K562 (cell line): ENCODE measurements at regions of chr10 and their contacts with region 1.

Region 1: DNA sequence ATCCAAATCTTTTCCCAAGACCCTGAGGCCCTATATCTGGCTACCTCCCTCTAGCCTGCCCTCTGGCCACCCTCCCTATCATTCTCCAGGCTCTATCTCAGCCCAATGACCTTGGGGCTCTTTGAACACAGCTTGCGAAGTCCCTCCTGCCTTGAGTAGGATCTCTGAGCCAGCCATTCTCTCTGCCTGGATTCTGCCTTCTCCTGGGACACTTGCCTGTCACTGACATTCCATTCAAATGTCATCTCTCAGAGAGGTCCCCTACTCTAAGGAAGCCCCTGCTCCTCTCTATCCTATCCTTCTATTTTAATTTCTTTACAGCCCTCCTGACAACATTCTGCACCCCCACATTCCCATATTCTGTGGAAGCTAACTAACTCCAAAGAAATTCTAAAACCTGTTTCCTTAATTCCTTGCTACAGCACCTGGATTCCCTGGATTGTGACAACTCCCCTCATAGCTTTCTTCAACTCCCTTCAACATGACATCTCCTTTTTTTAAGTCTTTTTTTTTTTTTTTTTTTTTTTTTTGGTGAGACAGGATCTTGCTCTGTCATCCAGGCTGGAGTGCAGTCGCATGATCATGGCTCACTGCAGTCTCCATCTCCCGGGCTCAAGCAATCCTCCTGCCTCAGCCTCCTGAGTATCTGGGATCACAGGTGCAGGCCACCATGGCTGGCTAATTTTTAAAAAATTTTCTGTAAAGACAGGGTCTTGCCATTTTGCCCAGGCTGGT is 81.0 kb upstream of the ASAH2 start:
- DNase-seq: peak; percentile 44 to 83 (median 60)
- ATAC-seq: peak; percentile 74
- H3K4me3 ChIP-seq: no peak overlapping the region
- H3K27ac ChIP-seq: peak overlapping the region; percentile 97
- H3K4me1 ChIP-seq: peaks cover 22 to 79% of the 10 kb centered on the region in 2 experiments
- H3K27me3 ChIP-seq: no peaks in the 10 kb centered on the region
- CTCF ChIP-seq: no peak
- EP300 ChIP-seq: no peak
- POLR2A ChIP-seq: no peak
- RAD21 ChIP-seq: no peak

Region 2: DNA sequence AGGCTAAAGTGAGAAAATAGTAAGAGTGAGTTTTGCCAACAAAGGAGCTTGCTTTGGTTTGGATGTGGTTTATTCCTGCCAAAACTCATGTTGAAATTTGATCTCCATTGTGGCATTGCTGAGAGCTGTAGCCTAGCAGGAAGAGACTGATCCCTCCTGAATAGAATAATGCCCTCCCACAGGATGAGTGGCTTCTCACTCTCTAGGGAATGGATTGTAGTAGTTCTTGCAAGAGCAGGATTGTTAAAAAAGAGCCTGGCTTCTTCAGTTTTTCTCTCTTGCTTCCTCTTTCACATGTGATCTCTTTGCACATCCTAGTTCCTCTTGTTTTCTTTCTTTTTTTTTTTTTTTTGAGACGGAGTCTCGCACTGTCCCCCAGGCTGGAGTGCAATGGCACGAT is 115.4 kb before region 1 on chr10:
- CTCF ChIA-PET with region 1: no interaction called
- POLR2A ChIA-PET with region 1: no interaction called
- in situ Hi-C with region 1: no loop called
- intact Hi-C with region 1: no loop called
- DNase-seq: no peak
- ATAC-seq: peak; percentile 31; the same call in 1 of the 3 replicates
- H3K4me3 ChIP-seq: no peak overlapping the region
- H3K27ac ChIP-seq: no peak overlapping the region
- H3K4me1 ChIP-seq: no peaks in the 10 kb centered on the region
- H3K27me3 ChIP-seq: no peaks in the 10 kb centered on the region
- CTCF ChIP-seq: no peak
- EP300 ChIP-seq: no peak
- POLR2A ChIP-seq: no peak
- RAD21 ChIP-seq: no peak

Region 3: DNA sequence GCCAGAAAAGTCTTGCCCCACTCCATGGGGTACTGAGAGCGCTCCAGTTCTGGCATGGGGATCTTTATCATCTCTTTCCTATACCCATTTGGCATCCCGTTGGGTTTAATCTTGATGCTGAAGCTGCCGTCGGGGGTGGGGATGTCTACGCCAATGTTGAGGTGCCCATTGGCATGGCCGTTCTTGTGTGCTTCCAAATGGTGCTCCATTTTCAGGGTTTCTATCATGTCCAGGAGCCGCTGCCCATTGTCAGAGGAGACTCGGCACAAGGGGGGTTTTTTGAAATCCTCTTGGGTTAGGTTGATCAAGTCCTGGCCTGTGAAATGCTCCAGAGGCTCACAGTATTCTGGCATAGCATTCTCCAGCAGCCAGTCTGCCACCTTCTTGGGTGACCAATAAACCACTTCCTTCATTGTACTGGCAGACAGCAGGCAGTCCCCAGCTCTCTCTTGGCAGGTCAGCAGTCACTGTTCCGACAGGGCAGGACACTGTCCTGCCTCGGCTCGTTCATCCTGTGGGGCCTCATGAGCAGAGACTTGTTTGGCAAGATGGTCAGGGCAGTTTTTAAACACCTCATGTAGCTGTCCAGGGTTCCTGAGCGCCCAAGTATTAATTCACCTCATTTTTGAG is 11.5 kb after region 1 on chr10:
- CTCF ChIA-PET with region 1: no interaction called
- POLR2A ChIA-PET with region 1: interaction called, 14 read pairs
- in situ Hi-C with region 1: no loop called
- intact Hi-C with region 1: no loop called
- DNase-seq: no peak
- ATAC-seq: no peak
- H3K4me3 ChIP-seq: no peak overlapping the region
- H3K27ac ChIP-seq: no peak overlapping the region
- H3K4me1 ChIP-seq: peaks cover 0 to 25% of the 10 kb centered on the region in 2 experiments; a peak in 3 of 5 replicates
- H3K27me3 ChIP-seq: no peaks in the 10 kb centered on the region
- CTCF ChIP-seq: no peak
- EP300 ChIP-seq: no peak
- POLR2A ChIP-seq: no peak
- RAD21 ChIP-seq: no peak

Region 4: DNA sequence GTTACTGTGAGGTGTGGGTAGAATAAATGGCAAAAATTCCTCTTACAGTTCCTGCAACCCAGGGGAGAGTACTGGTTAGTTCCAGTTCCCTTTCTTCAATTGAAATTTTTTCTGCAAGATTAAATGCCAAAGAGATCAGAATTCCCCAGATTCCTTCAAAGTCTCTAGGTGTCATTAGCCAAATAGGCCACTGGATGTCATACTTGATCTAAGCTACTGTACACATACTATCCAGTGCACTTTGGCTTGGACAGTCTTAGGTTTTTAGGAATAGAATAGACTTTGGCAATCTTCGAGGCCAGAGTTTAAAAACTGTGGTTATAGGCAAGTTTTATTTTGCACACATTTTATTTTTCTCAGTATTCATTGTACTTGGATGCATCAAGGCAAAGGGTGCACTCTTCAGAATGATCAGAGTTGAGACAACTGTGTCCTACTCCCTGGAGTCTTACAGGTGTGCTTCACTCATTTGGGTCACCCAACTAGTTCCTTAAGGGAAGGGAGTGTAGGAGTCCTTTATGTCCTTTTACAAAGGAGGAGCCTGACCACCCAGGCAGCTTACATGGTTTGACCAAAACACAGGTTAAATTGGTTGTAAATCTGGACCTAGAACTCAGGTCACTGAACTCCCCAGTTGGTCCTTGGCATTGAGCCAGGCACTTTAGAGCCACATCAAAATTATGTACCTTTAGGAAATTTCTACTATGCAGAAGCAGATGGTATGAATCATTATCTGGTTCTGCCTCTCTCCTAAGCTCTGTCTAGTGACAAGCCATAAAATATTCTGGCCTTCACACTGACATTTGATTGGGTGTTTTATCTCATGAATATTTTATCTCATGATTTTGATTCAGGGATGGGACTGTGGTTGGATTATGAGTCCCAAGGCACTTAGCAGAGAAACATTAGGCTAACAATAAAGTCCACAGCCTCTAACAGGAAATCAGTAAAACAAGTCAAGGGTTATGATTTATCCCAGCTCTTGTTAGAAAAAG is 457.0 kb after region 1 on chr10:
- CTCF ChIA-PET with region 1: no interaction called
- POLR2A ChIA-PET with region 1: no interaction called
- in situ Hi-C with region 1: no loop called
- intact Hi-C with region 1: no loop called
- DNase-seq: peak; percentile 15 to 42 (median 39)
- ATAC-seq: peak; percentile 90
- H3K4me3 ChIP-seq: no peak overlapping the region
- H3K27ac ChIP-seq: no peak overlapping the region
- H3K4me1 ChIP-seq: no peaks in the 10 kb centered on the region
- H3K27me3 ChIP-seq: peaks cover 0 to 3% of the 10 kb centered on the region in 2 experiments; a peak in 1 of 5 replicates
- CTCF ChIP-seq: peak; percentile 41 to 65 (median 50); a peak in 5 of 6 replicates
- EP300 ChIP-seq: no peak
- POLR2A ChIP-seq: no peak
- RAD21 ChIP-seq: peak; percentile 68 to 80